Natural killer cell (primary cell): ENCODE measurements at regions of chr22 and their contacts with region 1.

Region 1: DNA sequence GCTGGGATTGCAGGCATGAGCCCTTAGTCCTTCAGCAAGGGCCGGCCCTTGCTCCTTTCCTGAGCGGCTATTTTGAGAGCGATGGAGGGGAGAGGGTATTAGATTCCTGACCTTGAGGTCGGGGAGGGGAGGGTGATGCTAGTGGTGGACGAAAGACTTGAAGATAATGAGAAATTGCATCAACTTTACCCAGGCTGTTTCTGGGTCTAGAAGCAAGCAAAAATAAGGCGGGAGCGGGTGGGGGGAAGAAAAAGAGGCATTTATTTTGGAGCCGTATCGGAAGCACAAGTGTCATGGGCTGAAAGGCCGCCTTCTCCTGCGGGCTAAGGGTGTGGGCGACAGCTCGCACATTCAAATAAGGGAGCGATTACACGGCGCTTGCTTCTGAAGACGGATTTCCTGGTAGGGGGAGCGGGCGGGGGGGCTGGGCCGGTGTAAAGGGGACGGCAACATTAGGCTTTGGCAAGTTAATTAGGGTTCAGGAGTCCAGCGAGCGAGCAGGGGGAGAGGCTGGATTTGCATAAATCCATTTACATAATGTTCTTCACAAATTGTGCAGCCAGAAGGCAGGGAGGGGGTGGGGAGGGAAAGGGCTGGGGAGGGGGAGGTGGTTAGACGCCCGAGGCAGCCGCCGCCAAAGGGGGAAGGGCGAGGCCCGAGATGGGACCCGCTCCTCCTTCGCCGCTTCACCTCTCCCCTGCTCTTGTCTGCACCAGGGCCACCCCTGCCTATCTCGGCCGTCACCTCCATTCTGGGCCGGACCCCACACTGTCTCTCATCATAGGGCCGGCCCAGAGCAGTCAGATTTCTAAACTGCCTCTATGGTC is 245.9 kb downstream of the MIAT start:
- DNase-seq: peak in 1 of 2 donors; percentile 13
- ATAC-seq: peak; percentile 38 to 80 (median 60)
- H3K4me3 ChIP-seq: peak overlapping the region; percentile 17
- H3K4me3 Mint-ChIP-seq: peak overlapping the region; percentile 92
- H3K27ac ChIP-seq: no peak overlapping the region
- H3K27ac Mint-ChIP-seq: peak overlapping the region; percentile 70 to 81
- H3K4me1 ChIP-seq: peaks cover 6% of the 10 kb centered on the region
- H3K4me1 Mint-ChIP-seq: peaks cover 19 to 21% of the 10 kb centered on the region in 2 donors
- H3K27me3 ChIP-seq: no peaks in the 10 kb centered on the region
- H3K27me3 Mint-ChIP-seq: peaks cover 15 to 25% of the 10 kb centered on the region in 2 donors
- CTCF ChIP-seq: no peak

Region 2: DNA sequence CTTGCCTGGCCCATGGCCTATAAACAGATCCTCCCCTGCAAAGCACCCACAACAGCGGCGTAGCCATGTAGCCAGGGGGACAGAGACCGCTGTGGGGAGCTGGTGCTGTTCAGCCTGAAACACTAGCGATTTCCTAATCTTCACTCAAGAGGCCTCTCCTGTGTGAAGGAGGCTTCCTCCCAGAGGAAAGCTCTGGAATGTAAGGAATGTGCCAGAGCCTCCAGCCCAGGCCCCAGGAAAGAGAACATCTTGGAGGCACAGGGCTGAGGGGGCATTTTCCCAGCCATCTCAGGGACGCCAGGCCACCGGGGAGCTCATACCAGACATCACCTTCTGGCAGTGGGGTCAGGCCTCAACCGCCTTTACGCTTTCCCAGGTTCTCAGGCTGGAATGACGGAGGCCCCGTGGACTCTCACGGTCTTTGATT is 221.8 kb before region 1 on chr22:
- intact Hi-C with region 1: loop called (anchors 5 kb)
- DNase-seq: no peak
- ATAC-seq: no peak
- H3K4me3 ChIP-seq: no peak overlapping the region
- H3K4me3 Mint-ChIP-seq: no peak overlapping the region
- H3K27ac ChIP-seq: no peak overlapping the region
- H3K27ac Mint-ChIP-seq: no peak overlapping the region
- H3K4me1 ChIP-seq: peaks cover 12% of the 10 kb centered on the region
- H3K4me1 Mint-ChIP-seq: peaks cover 26 to 54% of the 10 kb centered on the region in 2 donors
- H3K27me3 ChIP-seq: no peaks in the 10 kb centered on the region
- H3K27me3 Mint-ChIP-seq: no peaks in the 10 kb centered on the region
- CTCF ChIP-seq: no peak

Region 3: GRCh38 chr22:26857169-26857568 is 46.1 kb before region 1 on chr22:
- intact Hi-C with region 1: no loop called
- DNase-seq: no peak
- ATAC-seq: no peak
- H3K4me3 ChIP-seq: no peak overlapping the region
- H3K4me3 Mint-ChIP-seq: no peak overlapping the region
- H3K27ac ChIP-seq: no peak overlapping the region
- H3K27ac Mint-ChIP-seq: no peak overlapping the region
- H3K4me1 ChIP-seq: no peaks in the 10 kb centered on the region
- H3K4me1 Mint-ChIP-seq: no peaks in the 10 kb centered on the region
- H3K27me3 ChIP-seq: no peaks in the 10 kb centered on the region
- H3K27me3 Mint-ChIP-seq: no peaks in the 10 kb centered on the region
- CTCF ChIP-seq: no peak